Activated T-helper 2 cell treated with anti-CD3 and anti-CD28 coated beads, Interferon-gamma antibody, Interleukin-2, Interleukin-4, amounts not matched to agents 10 μg/mL and 5 μg/mL and 100 μg/mL, durations not matched to agents 14 hours and 24 hours and 36 hours (primary cell): ENCODE measurements at regions of chr9 and their contacts with region 1.

Region 1: GRCh38 chr9:76562511-76562911 is 103.5 kb downstream of the GCNT1 start:
- DNase-seq: no peak
- H3K4me3 Mint-ChIP-seq: no peak overlapping the region
- H3K27ac Mint-ChIP-seq: peak overlapping the region; percentile 43
- H3K4me1 Mint-ChIP-seq: peaks cover 23% of the 10 kb centered on the region
- H3K27me3 Mint-ChIP-seq: peaks cover 4% of the 10 kb centered on the region

Region 2: GRCh38 chr9:76403352-76403751 is 159.2 kb before region 1 on chr9:
- intact Hi-C with region 1: loop called (anchors 5 kb)
- DNase-seq: peak; percentile 15
- H3K4me3 Mint-ChIP-seq: peak overlapping the region; percentile 58
- H3K27ac Mint-ChIP-seq: peak overlapping the region; percentile 76
- H3K4me1 Mint-ChIP-seq: peaks cover 22% of the 10 kb centered on the region
- H3K27me3 Mint-ChIP-seq: no peaks in the 10 kb centered on the region

Region 3: GRCh38 chr9:76576344-76576743 is 13.8 kb after region 1 on chr9:
- intact Hi-C with region 1: loop called (anchors 1 kb)
- DNase-seq: peak; percentile 57
- H3K4me3 Mint-ChIP-seq: no peak overlapping the region
- H3K27ac Mint-ChIP-seq: peak overlapping the region; percentile 73
- H3K4me1 Mint-ChIP-seq: peaks cover 29% of the 10 kb centered on the region
- H3K27me3 Mint-ChIP-seq: peaks cover 5% of the 10 kb centered on the region

Region 4: GRCh38 chr9:76586390-76587314 is 24.1 kb after region 1 on chr9:
- intact Hi-C with region 1: no loop called
- DNase-seq: no peak
- H3K4me3 Mint-ChIP-seq: no peak overlapping the region
- H3K27ac Mint-ChIP-seq: no peak overlapping the region
- H3K4me1 Mint-ChIP-seq: peaks cover 10% of the 10 kb centered on the region
- H3K27me3 Mint-ChIP-seq: peaks cover 14% of the 10 kb centered on the region

Region 5: GRCh38 chr9:76603448-76603895 is 41.0 kb after region 1 on chr9:
- intact Hi-C with region 1: loop called (anchors 5 kb)
- DNase-seq: no peak
- H3K4me3 Mint-ChIP-seq: no peak overlapping the region
- H3K27ac Mint-ChIP-seq: no peak overlapping the region
- H3K4me1 Mint-ChIP-seq: peaks cover 7% of the 10 kb centered on the region
- H3K27me3 Mint-ChIP-seq: peaks cover 10% of the 10 kb centered on the region

Region 6: GRCh38 chr9:77725820-77726219 is 1163.3 kb after region 1 on chr9:
- intact Hi-C with region 1: loop called (anchors 10 kb)
- DNase-seq: no peak
- H3K4me3 Mint-ChIP-seq: peak overlapping the region; percentile 5
- H3K27ac Mint-ChIP-seq: peak overlapping the region; percentile 71
- H3K4me1 Mint-ChIP-seq: peaks cover 33% of the 10 kb centered on the region
- H3K27me3 Mint-ChIP-seq: no peaks in the 10 kb centered on the region